GM23248 (cell line): ENCODE measurements at regions of chr11 and their contacts with region 1.

Region 1: DNA sequence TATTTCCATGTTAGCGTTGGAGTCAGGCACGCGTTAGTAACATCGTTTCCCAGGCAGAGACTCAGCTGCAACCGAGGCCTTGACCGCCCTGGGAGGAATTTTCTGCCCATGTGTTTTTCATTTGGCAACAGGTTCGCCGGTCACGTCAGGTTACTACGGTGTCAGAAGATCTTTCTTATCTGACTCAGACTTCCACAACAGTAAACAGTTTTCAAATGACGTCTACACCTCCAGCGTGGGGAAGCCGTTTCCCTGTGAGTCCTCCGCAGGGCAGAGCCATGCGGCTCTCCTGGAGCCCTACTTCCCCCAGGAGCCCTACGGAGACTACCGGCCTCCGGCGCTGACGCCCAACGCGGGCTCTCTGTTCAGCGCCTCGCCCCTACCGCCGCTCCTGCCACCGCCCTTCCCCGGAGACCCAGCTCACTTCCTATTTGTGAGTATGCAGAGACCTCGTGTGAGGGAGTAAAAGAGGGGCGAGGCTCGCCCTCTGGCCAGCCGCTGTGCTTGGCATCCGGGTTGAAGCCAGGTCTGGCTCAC is 14.3 kb upstream of the POU2AF3 start:
- DNase-seq: no peak
- H3K4me3 ChIP-seq: no peak overlapping the region
- H3K27ac ChIP-seq: no peak overlapping the region
- H3K4me1 ChIP-seq: no peaks in the 10 kb centered on the region
- H3K27me3 ChIP-seq: peaks cover 3% of the 10 kb centered on the region

Region 2: GRCh38 chr11:111230122-111230465 is 53.9 kb before region 1 on chr11:
- in situ Hi-C with region 1: no loop called
- DNase-seq: no peak
- H3K4me3 ChIP-seq: peak overlapping the region; percentile 73; the same call in 1 of the 2 replicates
- H3K27ac ChIP-seq: no peak overlapping the region
- H3K4me1 ChIP-seq: no peaks in the 10 kb centered on the region
- H3K27me3 ChIP-seq: no peaks in the 10 kb centered on the region

Region 3: GRCh38 chr11:111429066-111429506 is 145.1 kb after region 1 on chr11:
- in situ Hi-C with region 1: loop called (anchors 5 kb)
- DNase-seq: peak; percentile 80
- H3K4me3 ChIP-seq: no peak overlapping the region
- H3K27ac ChIP-seq: no peak overlapping the region
- H3K4me1 ChIP-seq: no peaks in the 10 kb centered on the region
- H3K27me3 ChIP-seq: no peaks in the 10 kb centered on the region; the same call in 1 of the 2 replicates